Activated B cell treated with CpG ODN at 0.5 μM for 24 hours (primary cell): ENCODE measurements at regions of chr1 and their contacts with region 1.

Region 1: DNA sequence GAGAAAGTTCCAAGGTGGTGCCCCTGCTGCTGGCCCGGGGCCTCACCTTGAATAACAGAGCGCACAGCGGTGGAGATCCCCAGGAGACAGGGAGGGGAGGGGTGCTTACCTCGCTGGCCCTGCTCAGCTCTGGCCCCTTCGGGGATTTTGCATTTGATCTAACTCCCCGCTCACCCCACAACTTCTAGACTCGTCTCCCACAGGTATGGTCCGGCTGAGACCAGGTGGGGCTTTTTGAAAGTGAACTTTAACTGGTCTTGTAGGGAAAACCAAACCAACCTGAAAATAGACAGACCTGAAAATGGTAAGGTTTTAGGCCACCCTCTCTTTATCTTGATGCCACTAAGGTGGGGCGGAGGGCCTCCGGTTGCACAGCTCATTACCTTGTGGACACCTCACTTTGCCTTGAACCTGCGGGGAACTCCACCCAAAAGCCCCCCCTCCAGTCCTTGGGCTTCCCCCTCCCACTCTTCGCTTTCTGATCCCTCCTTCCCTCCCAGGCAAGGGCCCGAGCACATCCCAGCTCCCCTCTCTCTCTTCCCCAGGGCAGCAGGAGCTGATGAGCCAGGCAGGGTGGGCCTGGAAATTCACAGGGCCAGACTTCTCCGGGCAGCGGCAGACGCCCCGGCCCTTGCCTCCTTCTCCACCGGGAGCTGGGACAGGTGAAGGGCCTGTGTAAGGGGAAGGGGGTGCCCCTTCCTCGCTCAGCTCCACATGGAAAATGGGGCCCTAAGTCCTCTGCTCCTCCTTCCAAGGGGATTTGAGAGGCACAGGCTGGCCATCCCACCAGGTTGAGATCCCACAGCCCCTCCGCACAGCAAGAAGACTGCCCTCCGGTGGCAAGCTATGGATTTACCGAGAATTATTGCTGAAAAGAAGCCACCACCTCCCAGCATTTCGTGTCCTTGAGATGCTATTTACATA is 16.1 kb downstream of the TNFRSF8 start:
- DNase-seq: peak; percentile 35
- ATAC-seq: peak; percentile 76
- H3K4me3 Mint-ChIP-seq: peak overlapping the region; percentile 70
- H3K27ac Mint-ChIP-seq: peak overlapping the region; percentile 87
- H3K4me1 Mint-ChIP-seq: peaks cover 38% of the 10 kb centered on the region
- H3K27me3 Mint-ChIP-seq: no peaks in the 10 kb centered on the region
- CTCF ChIP-seq: no peak

Region 2: DNA sequence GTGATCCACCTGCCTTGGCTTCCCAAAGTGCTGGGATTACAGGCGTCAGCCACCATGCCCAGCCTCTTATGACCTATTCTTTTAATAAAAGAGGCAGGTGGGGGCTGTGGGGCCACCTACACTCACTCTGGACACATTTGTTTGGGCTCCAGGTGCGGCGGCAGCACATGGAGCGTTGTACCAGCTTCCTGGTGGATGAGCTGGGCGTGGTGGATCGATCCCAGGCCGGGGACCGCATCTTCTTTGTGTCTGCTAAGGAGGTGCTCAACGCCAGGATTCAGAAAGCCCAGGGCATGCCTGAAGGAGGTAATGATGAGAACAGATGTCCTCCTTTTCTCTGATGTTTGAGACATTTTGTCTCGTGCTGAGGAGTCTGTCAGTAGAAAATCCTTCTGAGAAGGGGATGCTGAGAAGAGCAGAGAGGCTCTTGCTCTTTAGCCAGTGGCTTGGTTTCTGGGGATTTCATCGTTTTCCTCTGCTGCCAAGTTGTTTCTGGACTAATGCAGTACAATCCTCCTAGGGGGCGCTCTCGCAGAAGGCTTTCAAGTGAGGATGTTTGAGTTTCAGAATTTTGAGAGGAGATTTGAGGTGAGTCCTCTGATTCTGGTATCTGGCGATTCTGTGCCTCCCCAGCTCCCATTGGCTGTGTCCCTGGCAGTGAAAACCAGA is 77.8 kb before region 1 on chr1:
- CTCF ChIA-PET with region 1: interaction called, 10 read pairs
- POLR2A ChIA-PET with region 1: interaction called, 3 read pairs
- intact Hi-C with region 1: loop called (anchors 1 kb)
- DNase-seq: no peak
- ATAC-seq: no peak
- H3K4me3 Mint-ChIP-seq: no peak overlapping the region
- H3K27ac Mint-ChIP-seq: no peak overlapping the region
- H3K4me1 Mint-ChIP-seq: peaks cover 11% of the 10 kb centered on the region
- H3K27me3 Mint-ChIP-seq: no peaks in the 10 kb centered on the region
- CTCF ChIP-seq: no peak

Region 3: GRCh38 chr1:12040457-12041051 is 38.6 kb before region 1 on chr1:
- CTCF ChIA-PET with region 1: interaction called, 18 read pairs
- POLR2A ChIA-PET with region 1: interaction called, 27 read pairs
- intact Hi-C with region 1: loop called (anchors 1 kb)
- DNase-seq: no peak
- ATAC-seq: peak; percentile 85
- H3K4me3 Mint-ChIP-seq: peak overlapping the region; percentile 73
- H3K27ac Mint-ChIP-seq: peak overlapping the region; percentile 88
- H3K4me1 Mint-ChIP-seq: peaks cover 48% of the 10 kb centered on the region
- H3K27me3 Mint-ChIP-seq: no peaks in the 10 kb centered on the region
- CTCF ChIP-seq: no peak

Region 4: GRCh38 chr1:12067900-12068821 is 11.0 kb before region 1 on chr1:
- CTCF ChIA-PET with region 1: interaction called, 6 read pairs
- POLR2A ChIA-PET with region 1: interaction called, 17 read pairs
- intact Hi-C with region 1: loop called (anchors 1 kb)
- DNase-seq: no peak
- ATAC-seq: peak; percentile 48
- H3K4me3 Mint-ChIP-seq: peak overlapping the region; percentile 7
- H3K27ac Mint-ChIP-seq: no peak overlapping the region
- H3K4me1 Mint-ChIP-seq: peaks cover 37% of the 10 kb centered on the region
- H3K27me3 Mint-ChIP-seq: peaks cover 38% of the 10 kb centered on the region
- CTCF ChIP-seq: no peak

Region 5: DNA sequence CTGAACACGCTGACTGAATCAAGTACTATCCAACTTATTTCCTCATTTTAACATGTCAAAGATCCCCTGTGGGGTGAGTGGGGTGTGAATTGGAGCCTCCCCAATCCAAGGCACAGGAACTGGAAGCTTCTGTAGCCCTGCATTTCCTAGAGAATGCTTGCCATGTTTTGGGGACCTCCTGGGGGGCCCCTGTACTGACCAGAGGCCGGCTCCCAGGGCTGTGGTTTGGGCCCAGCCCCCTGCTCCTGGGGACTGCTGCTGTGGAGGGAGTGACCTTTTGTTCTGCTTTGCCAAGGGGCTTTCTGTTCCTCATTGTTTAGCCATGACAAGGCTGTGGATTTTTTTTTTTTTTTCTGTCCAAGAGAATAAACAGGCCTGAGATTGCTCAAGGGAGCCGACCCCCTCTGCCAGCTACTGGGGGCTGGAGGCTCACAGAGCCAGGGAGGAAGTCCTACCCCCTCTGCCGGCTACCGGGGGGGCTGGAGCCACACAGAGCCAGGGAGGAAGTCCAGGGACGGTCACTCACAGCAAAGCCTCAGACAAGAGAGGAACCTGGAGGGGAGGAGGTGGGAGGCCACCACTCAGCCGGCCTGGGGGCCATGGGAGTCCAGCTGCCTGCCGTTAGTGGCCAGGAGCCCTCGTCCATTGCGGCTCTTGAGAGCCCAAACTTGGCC is 104.9 kb after region 1 on chr1:
- CTCF ChIA-PET with region 1: no interaction called
- POLR2A ChIA-PET with region 1: no interaction called
- intact Hi-C with region 1: no loop called
- DNase-seq: no peak
- ATAC-seq: peak; percentile 71
- H3K4me3 Mint-ChIP-seq: peak overlapping the region; percentile 48
- H3K27ac Mint-ChIP-seq: peak overlapping the region; percentile 70
- H3K4me1 Mint-ChIP-seq: peaks cover 73% of the 10 kb centered on the region
- H3K27me3 Mint-ChIP-seq: no peaks in the 10 kb centered on the region
- CTCF ChIP-seq: no peak